ENCODE measurements at regions of chr2 and their contacts with region 1.

Region 1: GRCh38 chr2:70948337-70949003 is 12.8 kb downstream of the ATP6V1B1 start:
- DNase-seq: peak; percentile 87
- H3K4me3 ChIP-seq: peak overlapping the region; percentile 27 to 54
- H3K27ac ChIP-seq: peak overlapping the region in 1 of 2 experiments; percentile 44; a peak in 2 of 4 replicates
- H3K4me1 ChIP-seq: peaks cover 5 to 8% of the 10 kb centered on the region in 2 experiments; a peak in 2 of 4 replicates
- H3K27me3 ChIP-seq: no peaks in the 10 kb centered on the region
- CTCF ChIP-seq: peak; percentile 81
- EP300 ChIP-seq: no peak
- RAD21 ChIP-seq: peak; percentile 56

Region 2: DNA sequence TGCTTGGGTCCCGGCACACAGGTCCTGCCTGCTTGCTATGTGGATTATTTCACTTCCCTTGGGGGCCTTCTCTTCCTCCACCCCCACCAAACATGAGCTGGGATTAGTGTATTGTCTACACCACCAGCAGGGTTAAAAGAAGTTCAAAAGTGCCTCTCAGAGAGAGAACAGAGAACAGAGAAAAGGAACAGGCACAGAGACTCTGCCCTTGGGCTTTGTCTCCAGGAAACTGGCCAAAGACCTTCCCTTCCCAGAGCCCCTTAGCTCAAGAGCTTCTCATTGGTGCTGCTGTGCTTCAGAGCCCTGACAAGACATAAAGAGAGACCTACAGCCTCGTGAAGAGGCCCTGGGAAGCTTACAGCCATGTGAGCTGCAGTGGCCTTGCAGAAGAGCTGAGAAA is 151.0 kb before region 1 on chr2:
- CTCF ChIA-PET with region 1: interaction called, 11 read pairs
- POLR2A ChIA-PET with region 1: no interaction called
- DNase-seq: no peak
- H3K4me3 ChIP-seq: no peak overlapping the region
- H3K27ac ChIP-seq: no peak overlapping the region
- H3K4me1 ChIP-seq: no peaks in the 10 kb centered on the region
- H3K27me3 ChIP-seq: peaks cover 8% of the 10 kb centered on the region; the same call in 1 of the 2 replicates
- CTCF ChIP-seq: no peak
- EP300 ChIP-seq: no peak
- RAD21 ChIP-seq: no peak

Region 3: DNA sequence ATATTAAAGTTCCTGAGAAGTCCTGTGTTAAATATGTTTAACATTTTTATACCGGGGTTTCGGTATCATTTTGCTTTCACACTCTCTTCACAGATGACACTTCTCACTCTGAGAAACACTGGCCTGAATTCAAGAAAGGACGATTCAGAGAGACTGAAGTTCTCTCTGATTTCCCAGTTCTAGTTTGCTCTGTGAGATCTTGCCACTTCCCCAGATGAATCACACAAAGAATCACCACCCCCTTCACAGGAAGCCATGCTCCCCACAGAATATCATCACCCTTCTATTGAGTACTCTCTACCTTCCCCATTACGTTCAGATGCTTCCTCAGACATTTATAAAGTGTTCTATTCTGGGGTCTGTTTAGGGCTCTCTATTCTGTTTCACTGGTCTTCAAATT is 96.8 kb before region 1 on chr2:
- CTCF ChIA-PET with region 1: interaction called, 16 read pairs
- POLR2A ChIA-PET with region 1: no interaction called
- DNase-seq: no peak
- H3K4me3 ChIP-seq: no peak overlapping the region
- H3K27ac ChIP-seq: no peak overlapping the region
- H3K4me1 ChIP-seq: no peaks in the 10 kb centered on the region
- H3K27me3 ChIP-seq: no peaks in the 10 kb centered on the region; the same call in 1 of the 2 replicates
- CTCF ChIP-seq: no peak
- EP300 ChIP-seq: no peak
- RAD21 ChIP-seq: no peak

Region 4: DNA sequence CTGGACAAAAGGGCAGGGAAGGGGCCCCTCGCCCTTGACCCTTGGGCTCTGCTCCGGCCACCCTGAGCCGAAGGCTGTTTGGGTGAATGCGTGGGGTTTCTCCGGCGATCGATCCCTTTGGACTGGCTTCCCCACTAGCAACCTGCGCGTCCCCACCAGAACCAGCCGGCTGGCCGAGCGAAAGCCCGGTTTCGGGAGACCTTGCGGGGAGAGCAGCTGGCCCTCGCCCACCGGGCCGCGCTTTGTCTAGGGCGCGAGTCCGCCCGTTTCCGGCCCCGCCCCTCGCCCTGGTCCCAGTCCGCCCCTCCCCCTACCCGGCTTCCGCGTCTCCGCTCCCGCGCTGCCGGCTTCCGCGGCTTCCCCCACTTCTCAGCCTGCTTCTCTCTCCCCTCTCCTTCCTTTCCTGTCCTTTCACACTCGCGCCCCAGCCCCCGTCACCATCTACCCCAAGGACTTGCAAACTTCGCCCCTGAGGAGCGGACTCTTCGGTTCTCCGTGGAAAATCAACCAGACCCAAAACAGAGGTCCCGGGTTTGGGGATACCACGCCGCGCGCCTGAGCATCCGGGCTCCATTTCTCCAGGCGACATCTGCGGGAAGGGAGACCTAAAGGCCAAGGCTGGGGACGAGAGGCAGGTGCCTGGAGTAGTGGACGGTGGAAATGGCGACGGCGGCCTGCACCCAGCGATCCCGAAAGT is 60.8 kb before region 1 on chr2:
- CTCF ChIA-PET with region 1: interaction called, 11 read pairs
- POLR2A ChIA-PET with region 1: no interaction called
- DNase-seq: peak; percentile 70
- H3K4me3 ChIP-seq: peak overlapping the region in 1 of 2 experiments; percentile 21; a peak in 1 of 4 replicates
- H3K27ac ChIP-seq: no peak overlapping the region
- H3K4me1 ChIP-seq: no peaks in the 10 kb centered on the region
- H3K27me3 ChIP-seq: no peaks in the 10 kb centered on the region
- CTCF ChIP-seq: no peak
- EP300 ChIP-seq: no peak
- RAD21 ChIP-seq: no peak

Region 5: GRCh38 chr2:70919672-70920366 is 28.7 kb before region 1 on chr2:
- CTCF ChIA-PET with region 1: interaction called, 60 read pairs
- POLR2A ChIA-PET with region 1: no interaction called
- DNase-seq: peak; percentile 83
- H3K4me3 ChIP-seq: no peak overlapping the region; a peak in 1 of 4 replicates
- H3K27ac ChIP-seq: no peak overlapping the region
- H3K4me1 ChIP-seq: no peaks in the 10 kb centered on the region
- H3K27me3 ChIP-seq: no peaks in the 10 kb centered on the region
- CTCF ChIP-seq: peak; percentile 93
- EP300 ChIP-seq: no peak
- RAD21 ChIP-seq: peak; percentile 82

Region 6: GRCh38 chr2:70964596-70965386 is 16.3 kb after region 1 on chr2:
- CTCF ChIA-PET with region 1: interaction called, 93 read pairs
- POLR2A ChIA-PET with region 1: no interaction called
- DNase-seq: peak; percentile 84
- H3K4me3 ChIP-seq: peak overlapping the region; percentile 39 to 58
- H3K27ac ChIP-seq: no peak overlapping the region
- H3K4me1 ChIP-seq: no peaks in the 10 kb centered on the region; a peak in 1 of 4 replicates
- H3K27me3 ChIP-seq: no peaks in the 10 kb centered on the region
- CTCF ChIP-seq: peak; percentile 64
- EP300 ChIP-seq: no peak
- RAD21 ChIP-seq: peak; percentile 62